RWPE1 (cell line): ENCODE measurements at regions of chr5 and their contacts with region 1.

Region 1: GRCh38 chr5:127260686-127261085 is 29.9 kb upstream of the MEGF10 start:
- DNase-seq: no peak
- H3K27ac ChIP-seq: no peak overlapping the region
- CTCF ChIP-seq: no peak

Region 2: GRCh38 chr5:126422989-126423788 is 837.5 kb before region 1 on chr5 and contains the start of gene GRAMD2B:
- CTCF ChIA-PET with region 1: no interaction called
- POLR2A ChIA-PET with region 1: interaction called, 11 read pairs
- DNase-seq: peak; percentile 90
- H3K27ac ChIP-seq: peak within 1 kb of the TSS; percentile 81
- CTCF ChIP-seq: no peak

Region 3: GRCh38 chr5:127290019-127290945 is 29.6 kb after region 1 on chr5 and contains the start of gene MEGF10:
- CTCF ChIA-PET with region 1: no interaction called
- POLR2A ChIA-PET with region 1: no interaction called
- DNase-seq: peak; percentile 84
- H3K27ac ChIP-seq: no peak within 1 kb of the TSS
- CTCF ChIP-seq: peak; percentile 67

Region 4: GRCh38 chr5:127410959-127411358 is 150.3 kb after region 1 on chr5:
- CTCF ChIA-PET with region 1: no interaction called
- POLR2A ChIA-PET with region 1: no interaction called
- DNase-seq: no peak
- H3K27ac ChIP-seq: no peak overlapping the region
- CTCF ChIP-seq: no peak